ENCODE measurements at regions of chr6 and their contacts with region 1.

Region 1: GRCh38 chr6:141562851-141563763 is 569.6 kb upstream of the GJE1 start:
- DNase-seq: peak; percentile 97
- H3K4me3 ChIP-seq: peak overlapping the region in 2 of 3 experiments; percentile 23 to 59
- H3K27ac ChIP-seq: peak overlapping the region; percentile 86
- H3K4me1 ChIP-seq: peaks cover 17% of the 10 kb centered on the region
- H3K27me3 ChIP-seq: no peaks in the 10 kb centered on the region
- CTCF ChIP-seq: peak; percentile 57 to 69
- POLR2A ChIP-seq: no peak

Region 2: GRCh38 chr6:139764498-139764986 is 1798.6 kb before region 1 on chr6:
- CTCF ChIA-PET with region 1: no interaction called
- POLR2A ChIA-PET with region 1: no interaction called
- dilution Hi-C with region 1: no loop called
- intact Hi-C with region 1: loop called (anchors 5 kb)
- DNase-seq: peak; percentile 91
- H3K4me3 ChIP-seq: no peak overlapping the region
- H3K27ac ChIP-seq: peak overlapping the region; percentile 96
- H3K4me1 ChIP-seq: peaks cover 42% of the 10 kb centered on the region
- H3K27me3 ChIP-seq: no peaks in the 10 kb centered on the region
- CTCF ChIP-seq: no peak
- POLR2A ChIP-seq: peak; percentile 63

Region 3: GRCh38 chr6:140052756-140053729 is 1510.1 kb before region 1 on chr6:
- CTCF ChIA-PET with region 1: interaction called, 10 read pairs
- POLR2A ChIA-PET with region 1: no interaction called
- dilution Hi-C with region 1: no loop called
- intact Hi-C with region 1: no loop called
- DNase-seq: peak; percentile 26
- H3K4me3 ChIP-seq: no peak overlapping the region
- H3K27ac ChIP-seq: no peak overlapping the region
- H3K4me1 ChIP-seq: peaks cover 7% of the 10 kb centered on the region
- H3K27me3 ChIP-seq: no peaks in the 10 kb centered on the region
- CTCF ChIP-seq: peak; percentile 16 to 31
- POLR2A ChIP-seq: no peak

Region 4: GRCh38 chr6:140572129-140572528 is 991.0 kb before region 1 on chr6:
- CTCF ChIA-PET with region 1: no interaction called
- POLR2A ChIA-PET with region 1: no interaction called
- dilution Hi-C with region 1: no loop called
- intact Hi-C with region 1: loop called (anchors 5 kb)
- DNase-seq: peak; percentile 96
- H3K4me3 ChIP-seq: no peak overlapping the region
- H3K27ac ChIP-seq: peak overlapping the region; percentile 84
- H3K4me1 ChIP-seq: peaks cover 24% of the 10 kb centered on the region
- H3K27me3 ChIP-seq: no peaks in the 10 kb centered on the region
- CTCF ChIP-seq: no peak
- POLR2A ChIP-seq: peak; percentile 44

Region 5: DNA sequence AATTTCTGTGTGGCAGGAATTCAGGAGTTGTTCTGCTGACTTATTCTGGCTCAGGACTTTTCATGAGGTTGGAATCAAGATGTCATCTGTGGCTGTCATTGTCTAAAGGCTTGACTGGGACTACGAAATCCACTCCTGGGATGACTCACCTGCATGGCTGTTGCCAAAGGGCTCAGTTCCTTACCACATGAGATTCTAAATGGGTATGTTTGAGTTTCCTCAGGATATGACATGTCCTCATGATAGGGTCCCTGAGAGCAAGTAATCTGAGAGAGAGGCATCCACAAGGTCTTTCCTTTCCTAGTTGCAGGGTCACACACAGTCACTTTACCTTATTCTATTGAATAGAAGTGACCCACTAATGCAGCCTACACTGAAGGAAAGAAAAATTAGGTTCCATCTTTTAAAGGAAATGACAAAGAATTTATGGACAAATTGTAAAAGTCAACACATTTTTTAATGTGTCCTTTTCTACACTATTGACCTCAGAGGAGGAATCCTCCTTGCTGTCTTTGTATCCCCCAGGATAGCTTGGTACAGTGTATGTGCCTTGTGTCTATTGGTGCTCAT is 455.4 kb before region 1 on chr6:
- CTCF ChIA-PET with region 1: no interaction called
- POLR2A ChIA-PET with region 1: no interaction called
- dilution Hi-C with region 1: no loop called
- intact Hi-C with region 1: loop called (anchors 1 kb)
- DNase-seq: peak; percentile 70
- H3K4me3 ChIP-seq: no peak overlapping the region
- H3K27ac ChIP-seq: peak overlapping the region; percentile 50
- H3K4me1 ChIP-seq: peaks cover 20% of the 10 kb centered on the region
- H3K27me3 ChIP-seq: no peaks in the 10 kb centered on the region
- CTCF ChIP-seq: no peak
- POLR2A ChIP-seq: no peak

Region 6: GRCh38 chr6:141552473-141552878 is 10.6 kb before region 1 on chr6:
- CTCF ChIA-PET with region 1: interaction called, 4 read pairs
- POLR2A ChIA-PET with region 1: interaction called, 3 read pairs
- dilution Hi-C with region 1: no loop called
- intact Hi-C with region 1: loop called (anchors 1 kb)
- DNase-seq: peak; percentile 98
- H3K4me3 ChIP-seq: peak overlapping the region in 1 of 3 experiments; percentile 30
- H3K27ac ChIP-seq: peak overlapping the region; percentile 80
- H3K4me1 ChIP-seq: peaks cover 17% of the 10 kb centered on the region
- H3K27me3 ChIP-seq: no peaks in the 10 kb centered on the region
- CTCF ChIP-seq: no peak
- POLR2A ChIP-seq: peak; percentile 60

Measured in endothelial cell of umbilical vein (primary cell).